ENCODE measurements at regions of chr10 and their contacts with region 1.

Region 1: DNA sequence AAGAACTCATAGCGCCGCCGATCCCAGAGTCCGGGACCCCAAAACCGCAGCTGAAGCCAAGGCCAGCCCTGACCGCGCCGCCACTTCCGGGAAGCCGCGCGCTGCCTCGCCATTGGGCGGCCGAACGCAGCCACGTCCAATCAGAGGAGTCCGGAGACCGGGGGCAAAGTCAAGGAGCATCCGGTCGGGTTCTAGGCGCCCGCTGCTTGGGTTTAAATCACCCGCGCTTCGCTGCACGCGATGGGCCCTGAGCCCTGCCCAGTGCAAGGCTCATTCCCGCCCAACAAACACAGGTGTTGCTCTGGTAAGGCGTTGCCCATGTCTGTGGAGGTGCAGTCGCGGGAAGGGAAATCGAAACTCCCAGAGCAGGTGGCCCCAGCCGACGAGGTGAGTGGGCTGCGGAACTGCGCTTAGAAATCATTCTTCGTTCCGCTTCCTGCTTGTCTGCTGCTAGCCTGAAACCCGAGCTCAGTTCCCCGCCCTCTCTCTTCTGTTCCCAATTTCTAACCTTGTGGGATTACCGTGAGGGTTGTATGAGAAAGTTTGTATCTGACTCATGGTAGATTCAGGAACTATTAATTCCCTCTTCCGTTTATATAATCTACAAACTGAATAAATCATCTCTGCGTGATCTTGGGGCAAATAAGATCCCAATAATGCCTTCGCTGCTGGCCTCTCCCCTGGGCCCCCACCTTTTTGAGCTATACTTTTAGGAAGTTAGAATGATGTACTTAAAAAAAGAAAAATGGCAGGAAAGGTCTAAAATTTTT is at the start of gene DCLRE1C:
- H3K4me3 Mint-ChIP-seq: peak within 1 kb of the TSS; percentile 89
- H3K27ac Mint-ChIP-seq: peak within 1 kb of the TSS; percentile 99
- H3K4me1 Mint-ChIP-seq: peaks cover 60% of the 10 kb centered on the region
- H3K27me3 Mint-ChIP-seq: no peaks in the 10 kb centered on the region

Region 2: GRCh38 chr10:14843327-14843988 is 110.7 kb before region 1 on chr10:
- intact Hi-C with region 1: loop called (anchors 5 kb)
- H3K4me3 Mint-ChIP-seq: no peak overlapping the region
- H3K27ac Mint-ChIP-seq: no peak overlapping the region
- H3K4me1 Mint-ChIP-seq: peaks cover 8% of the 10 kb centered on the region
- H3K27me3 Mint-ChIP-seq: no peaks in the 10 kb centered on the region

Region 3: DNA sequence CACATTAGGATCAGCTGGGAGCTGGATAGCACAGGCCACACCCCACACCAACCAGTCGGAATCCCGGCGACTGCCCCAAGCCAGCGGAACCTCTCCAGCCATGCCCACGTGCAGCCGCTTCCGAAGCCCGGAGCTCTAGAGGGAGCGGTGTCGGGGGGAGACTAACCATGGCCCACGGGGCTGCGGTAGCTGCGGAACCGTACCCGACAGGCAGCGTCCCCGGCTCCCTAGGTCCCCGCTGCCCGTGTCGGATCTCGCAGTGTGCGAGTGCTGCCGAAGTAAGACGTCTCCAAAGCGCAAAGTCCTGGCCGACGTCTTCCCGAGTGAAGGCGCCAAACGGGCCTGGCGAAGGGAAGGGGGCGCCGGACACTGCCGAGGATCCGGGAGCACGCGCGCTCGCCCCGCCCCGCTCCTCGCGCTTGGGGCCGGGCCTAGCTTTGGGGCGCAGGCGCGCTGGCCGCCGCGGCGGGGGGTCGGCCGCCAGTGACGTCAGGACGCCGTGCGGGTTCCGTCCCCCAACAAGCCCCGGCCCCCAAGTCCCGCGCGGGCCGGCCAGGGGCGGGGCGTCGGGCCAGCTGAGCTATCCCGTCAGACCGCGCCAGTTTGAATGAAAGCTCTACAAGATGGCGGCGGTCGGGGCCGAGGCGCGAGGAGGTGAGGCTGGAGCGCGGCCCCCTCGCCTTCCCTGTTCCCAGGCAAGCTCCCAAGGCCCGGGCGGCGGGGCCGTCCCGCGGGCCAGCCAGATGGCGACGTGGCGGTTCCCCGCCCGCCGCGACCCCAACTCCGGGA is 75.7 kb before region 1 on chr10 and contains the start of gene SUV39H2:
- intact Hi-C with region 1: loop called (anchors 2 kb)
- H3K4me3 Mint-ChIP-seq: peak within 1 kb of the TSS; percentile 97
- H3K27ac Mint-ChIP-seq: peak within 1 kb of the TSS; percentile 94
- H3K4me1 Mint-ChIP-seq: peaks cover 41% of the 10 kb centered on the region
- H3K27me3 Mint-ChIP-seq: no peaks in the 10 kb centered on the region

Region 4: DNA sequence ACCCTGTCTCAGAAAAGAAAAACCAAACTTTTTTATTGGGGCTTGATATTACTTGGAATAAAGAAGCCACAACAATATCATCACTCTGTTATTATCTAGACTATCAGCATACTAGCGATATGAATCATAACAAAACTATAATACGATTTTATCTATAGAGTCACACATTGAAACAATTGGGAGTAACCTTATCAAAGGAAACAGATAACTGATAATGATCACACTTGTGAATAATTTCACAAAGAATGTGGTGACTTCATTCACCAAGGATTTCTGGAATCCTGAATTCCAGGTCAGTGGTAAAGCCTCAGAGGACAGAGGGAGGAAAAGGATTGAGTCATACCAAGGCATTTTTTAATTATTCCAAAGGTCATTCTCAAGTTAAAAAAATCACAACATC is 246.4 kb after region 1 on chr10:
- intact Hi-C with region 1: no loop called
- H3K4me3 Mint-ChIP-seq: no peak overlapping the region
- H3K27ac Mint-ChIP-seq: no peak overlapping the region
- H3K4me1 Mint-ChIP-seq: peaks cover 6% of the 10 kb centered on the region
- H3K27me3 Mint-ChIP-seq: peaks cover 48% of the 10 kb centered on the region